ENCODE measurements at regions of chr2 and their contacts with region 1.

Region 1: DNA sequence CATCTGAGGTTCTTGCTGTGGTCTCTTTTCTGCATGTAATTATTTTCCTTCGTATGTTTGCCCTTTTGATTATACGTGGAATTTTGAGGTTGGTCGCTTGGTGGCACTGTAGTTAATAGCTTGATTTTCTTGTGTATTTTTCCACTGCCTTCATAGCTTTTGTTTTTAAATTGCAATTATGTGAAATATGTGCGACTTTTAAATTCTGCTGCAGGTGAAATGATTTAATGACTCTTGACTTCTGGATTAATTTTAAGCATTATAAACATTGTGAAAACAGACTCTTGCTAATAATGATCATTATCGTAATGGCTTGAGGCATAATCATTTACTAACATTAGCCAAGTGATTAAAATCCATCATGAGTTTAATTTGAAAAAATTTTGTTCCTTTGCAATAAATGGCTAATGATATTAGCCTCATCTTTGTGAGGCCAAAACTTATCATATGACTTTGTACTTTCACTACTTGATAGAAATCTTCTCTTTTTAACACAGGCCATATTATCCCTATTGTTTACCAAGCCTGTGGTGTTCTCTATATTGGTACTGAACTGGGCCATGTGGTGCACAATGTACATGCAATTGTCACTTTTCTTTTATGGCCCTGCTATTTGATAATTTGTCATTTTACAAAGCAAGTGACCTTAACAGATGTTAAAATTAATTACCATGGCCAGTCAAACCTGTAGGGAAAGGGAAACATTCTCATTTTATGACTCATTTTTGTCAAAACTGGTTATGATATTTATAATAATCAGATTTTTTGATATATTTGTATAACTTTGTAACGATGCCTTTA is 62.8 kb upstream of the NEUROD1 start:
- DNase-seq: peak; percentile 35
- H3K4me3 Mint-ChIP-seq: no peak overlapping the region
- H3K27ac Mint-ChIP-seq: no peak overlapping the region
- H3K4me1 Mint-ChIP-seq: peaks cover 3% of the 10 kb centered on the region
- H3K27me3 Mint-ChIP-seq: peaks cover 32% of the 10 kb centered on the region

Region 2: GRCh38 chr2:181953881-181954537 is 210.9 kb after region 1 on chr2:
- CTCF ChIA-PET with region 1: interaction called, 10 read pairs
- POLR2A ChIA-PET with region 1: no interaction called
- DNase-seq: peak; percentile 68
- H3K4me3 Mint-ChIP-seq: peak overlapping the region; percentile 16
- H3K27ac Mint-ChIP-seq: no peak overlapping the region
- H3K4me1 Mint-ChIP-seq: peaks cover 12% of the 10 kb centered on the region
- H3K27me3 Mint-ChIP-seq: peaks cover 25% of the 10 kb centered on the region

Region 3: GRCh38 chr2:182077451-182078142 is 334.5 kb after region 1 on chr2:
- CTCF ChIA-PET with region 1: interaction called, 10 read pairs
- POLR2A ChIA-PET with region 1: no interaction called
- DNase-seq: no peak
- H3K4me3 Mint-ChIP-seq: no peak overlapping the region
- H3K27ac Mint-ChIP-seq: no peak overlapping the region
- H3K4me1 Mint-ChIP-seq: no peaks in the 10 kb centered on the region
- H3K27me3 Mint-ChIP-seq: peaks cover 4% of the 10 kb centered on the region

Measured in activated CD4-positive, alpha-beta memory T cell treated with anti-CD3 and anti-CD28 coated beads, Interleukin-2, amount 10 ng/mL, durations not matched to agents 7 days and 5 days (primary cell).